ENCODE measurements at regions of chr15 and their contacts with region 1.

Region 1: DNA sequence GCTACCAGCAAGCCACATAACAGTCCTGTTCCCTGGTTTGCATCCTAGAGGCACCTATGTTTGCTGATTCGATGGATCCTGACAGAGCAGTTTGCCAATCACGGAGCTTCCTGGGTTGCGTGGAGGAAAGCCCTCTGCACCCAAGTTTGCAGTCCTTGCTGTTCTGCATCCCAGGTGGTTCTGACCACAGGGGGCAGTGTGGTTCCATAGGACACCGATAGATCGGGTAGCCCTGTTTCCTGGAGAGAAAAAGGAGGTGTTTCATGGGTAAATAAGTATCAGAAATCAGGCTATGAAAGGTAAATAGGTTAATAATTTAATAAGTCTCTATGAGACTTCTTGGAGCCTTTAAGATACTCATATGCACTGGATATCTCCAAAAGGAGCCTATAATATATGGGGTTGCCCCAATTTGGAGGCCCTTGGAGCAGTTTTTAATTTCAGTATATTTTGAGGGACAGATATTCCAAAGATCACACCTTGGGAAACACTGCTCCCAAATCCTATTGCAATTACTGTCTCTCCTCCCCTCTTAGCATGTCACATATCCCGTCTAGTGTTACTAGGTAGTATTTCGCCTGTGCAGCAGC is 194.6 kb upstream of the TPM1 start:
- DNase-seq: peak in 1 of 2 donors; percentile 74
- H3K4me3 ChIP-seq: no peak overlapping the region
- H3K27ac ChIP-seq: no peak overlapping the region
- H3K4me1 ChIP-seq: peaks cover 0 to 25% (median 8%) of the 10 kb centered on the region in 4 donors
- H3K27me3 ChIP-seq: no peaks in the 10 kb centered on the region
- CTCF ChIP-seq: peak; percentile 59 to 71

Region 2: DNA sequence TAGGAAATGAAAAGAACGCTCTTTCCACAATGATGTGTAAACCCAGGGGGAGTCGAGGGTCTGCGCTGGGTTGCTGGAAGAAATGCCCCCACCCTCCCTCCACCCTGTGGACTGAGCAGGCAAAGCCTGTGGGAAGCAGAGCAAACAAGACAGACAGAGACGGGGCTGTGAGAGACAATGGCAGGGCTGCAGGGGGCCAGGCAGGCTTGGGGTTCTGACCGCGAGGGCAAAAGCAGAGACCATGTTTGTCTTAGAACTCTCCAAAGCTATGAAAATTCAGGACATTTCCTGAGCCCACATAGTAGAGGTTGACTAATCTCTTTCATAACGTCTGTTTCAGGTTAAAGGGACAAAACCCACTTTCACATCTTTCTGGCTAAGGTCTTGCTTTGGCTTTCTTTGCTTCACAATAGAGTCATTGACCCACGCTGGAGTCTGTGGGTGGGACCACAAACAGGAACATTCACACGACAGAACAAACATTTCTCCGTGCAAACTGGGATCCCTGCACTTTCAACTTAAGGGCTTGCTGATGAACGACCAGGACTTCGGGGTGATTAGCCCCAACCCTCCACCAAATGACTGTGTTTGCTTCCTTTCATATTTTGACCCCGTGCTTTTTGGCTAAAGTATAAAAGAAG is 38.6 kb after region 1 on chr15:
- intact Hi-C with region 1: no loop called
- DNase-seq: no peak
- H3K4me3 ChIP-seq: no peak overlapping the region
- H3K27ac ChIP-seq: no peak overlapping the region
- H3K4me1 ChIP-seq: peaks cover 0 to 9% (median 4%) of the 10 kb centered on the region in 4 donors
- H3K27me3 ChIP-seq: no peaks in the 10 kb centered on the region
- CTCF ChIP-seq: no peak

Region 3: GRCh38 chr15:63041974-63042819 is 194.2 kb after region 1 on chr15 and contains the start of gene TPM1:
- intact Hi-C with region 1: loop called (anchors 5 kb)
- DNase-seq: peak; percentile 93 to 97
- H3K4me3 ChIP-seq: peak within 1 kb of the TSS; percentile 90 to 95
- H3K27ac ChIP-seq: peak within 1 kb of the TSS; percentile 93 to 97
- H3K4me1 ChIP-seq: peaks cover 0 to 28% (median 14%) of the 10 kb centered on the region in 4 donors
- H3K27me3 ChIP-seq: no peaks in the 10 kb centered on the region
- CTCF ChIP-seq: peak in 1 of 2 experiments; percentile 8

Region 4: DNA sequence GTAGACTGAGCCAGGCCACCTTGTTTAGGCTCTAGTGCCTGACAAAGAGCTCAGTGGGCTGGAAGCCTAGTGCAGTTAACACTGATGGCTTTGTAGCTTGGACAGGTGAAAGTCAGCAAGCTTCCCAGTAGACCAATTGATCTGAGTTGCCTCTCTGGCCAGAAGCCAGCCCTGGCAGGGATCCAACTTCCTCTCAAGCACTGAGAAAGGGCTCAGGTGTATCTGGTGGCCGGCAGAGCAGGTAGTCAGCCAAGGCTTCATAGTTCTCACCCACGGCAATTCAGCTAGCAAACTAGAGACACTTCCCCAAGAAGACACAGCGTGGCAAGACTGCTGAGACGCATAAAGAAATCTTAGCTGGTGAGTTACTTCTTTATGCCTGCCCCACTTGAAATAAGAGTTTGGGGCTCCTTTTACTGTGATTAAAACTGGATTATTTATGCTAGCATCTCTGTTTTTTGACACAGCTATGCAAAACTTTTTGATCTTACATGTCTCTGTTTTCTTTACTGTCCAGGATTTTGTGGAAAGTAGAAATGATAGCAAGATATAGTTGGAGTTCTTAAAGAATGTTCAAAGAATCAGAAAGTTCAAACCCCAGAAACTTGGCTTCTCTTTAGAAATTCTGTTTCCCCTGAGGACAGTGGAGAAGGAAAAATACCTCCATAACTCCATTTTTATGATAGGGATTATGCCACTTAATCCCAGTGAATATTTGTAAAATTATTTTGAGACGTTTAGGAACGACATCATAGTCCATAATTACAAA is 542.1 kb after region 1 on chr15:
- intact Hi-C with region 1: loop called (anchors 10 kb)
- DNase-seq: no peak
- H3K4me3 ChIP-seq: no peak overlapping the region
- H3K27ac ChIP-seq: no peak overlapping the region
- H3K4me1 ChIP-seq: peaks cover 0 to 10% (median 0%) of the 10 kb centered on the region in 4 donors
- H3K27me3 ChIP-seq: no peaks in the 10 kb centered on the region
- CTCF ChIP-seq: no peak

Measured in tibial artery (tissue), 4 donors.